ENCODE measurements at regions of chr4 and their contacts with region 1.

Region 1: DNA sequence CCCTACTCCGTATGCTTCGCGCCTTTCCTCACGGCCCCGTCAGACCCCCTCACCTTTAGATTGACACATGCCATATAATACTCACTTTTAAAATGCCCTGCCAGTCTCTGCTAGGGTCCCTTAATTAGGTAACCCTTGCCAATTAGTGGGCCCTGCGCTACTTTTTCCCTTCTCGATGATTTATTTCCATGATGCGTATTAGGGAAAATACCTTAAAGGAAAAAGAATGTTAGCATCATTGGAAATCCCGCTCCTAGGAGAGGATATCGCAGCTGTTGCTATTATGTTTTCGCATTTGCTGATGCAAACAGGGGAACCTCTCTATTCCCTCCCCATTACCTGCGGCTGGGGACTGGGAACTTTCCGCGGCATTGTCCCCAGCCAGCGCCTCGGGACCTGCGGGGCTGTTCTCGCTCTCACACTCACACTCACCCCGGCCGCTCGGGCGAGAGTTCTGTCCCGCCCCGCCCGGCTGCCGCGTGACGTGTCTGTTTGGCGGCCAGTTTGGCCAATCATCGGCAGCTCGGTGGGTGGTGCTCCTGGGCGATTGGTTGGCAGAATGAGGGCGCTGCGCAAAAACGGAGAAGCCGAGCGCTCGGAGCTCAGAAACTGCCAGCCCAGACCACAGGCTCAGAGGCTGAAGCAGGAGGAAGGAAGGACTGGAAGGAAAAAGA is at the start of gene PCDH10:
- DNase-seq: no peak
- H3K4me3 Mint-ChIP-seq: no peak within 1 kb of the TSS
- H3K27ac Mint-ChIP-seq: no peak within 1 kb of the TSS
- H3K4me1 Mint-ChIP-seq: peaks cover 10% of the 10 kb centered on the region
- H3K27me3 Mint-ChIP-seq: peaks cover 45% of the 10 kb centered on the region
- CTCF ChIP-seq: no peak
- total RNA-seq, gene PCDH10: not detected in 2 replicates

Region 2: DNA sequence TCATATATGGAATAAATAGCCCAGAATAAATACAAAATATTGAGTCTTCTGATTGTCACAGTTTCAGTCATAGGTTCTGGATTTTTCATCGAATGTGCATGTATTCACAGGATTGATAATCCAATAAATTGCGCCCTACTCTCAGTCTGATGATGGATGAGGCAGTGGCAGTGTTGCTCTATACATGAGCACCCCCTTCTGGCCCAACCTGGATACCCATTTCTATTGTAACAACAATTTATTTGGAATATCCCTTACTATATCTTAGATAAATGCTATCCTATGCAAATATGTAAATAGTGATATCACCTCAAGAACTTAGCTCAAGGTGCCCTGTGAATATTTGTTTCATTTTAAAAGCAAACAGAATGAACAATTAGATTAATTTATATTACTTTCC is 1786.5 kb after region 1 on chr4:
- CTCF ChIA-PET with region 1: interaction called, 6 read pairs
- POLR2A ChIA-PET with region 1: interaction called, 3 read pairs
- intact Hi-C with region 1: loop called (anchors 1 kb)
- DNase-seq: peak; percentile 30
- H3K4me3 Mint-ChIP-seq: no peak overlapping the region
- H3K27ac Mint-ChIP-seq: no peak overlapping the region
- H3K4me1 Mint-ChIP-seq: peaks cover 5% of the 10 kb centered on the region
- H3K27me3 Mint-ChIP-seq: no peaks in the 10 kb centered on the region
- CTCF ChIP-seq: peak; percentile 24